Astrocyte of the cerebellum (primary cell): ENCODE measurements at regions of chr2 and their contacts with region 1.

Region 1: DNA sequence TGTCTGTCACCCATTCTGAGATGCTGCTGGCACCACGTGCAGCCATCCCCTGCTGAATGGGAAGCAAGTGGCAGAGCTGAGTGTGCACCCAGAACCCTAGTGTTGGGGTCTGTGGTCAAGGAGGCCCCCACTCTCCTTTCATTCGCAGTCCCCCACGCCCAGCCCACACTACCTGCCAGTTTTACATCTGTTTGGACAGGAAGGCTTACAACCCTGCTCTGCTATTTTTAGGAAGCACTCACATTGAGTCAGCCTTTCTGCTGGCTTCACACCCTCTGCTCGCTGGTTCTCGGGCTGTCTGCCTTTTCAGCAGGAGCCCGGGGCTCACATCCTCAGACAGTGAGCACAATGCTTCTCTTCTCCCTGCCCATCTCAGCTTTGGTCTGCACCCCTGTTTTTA is 10.7 kb upstream of the ADCY3 start:
- DNase-seq: no peak
- H3K4me3 ChIP-seq: no peak overlapping the region
- CTCF ChIP-seq: no peak

Region 2: DNA sequence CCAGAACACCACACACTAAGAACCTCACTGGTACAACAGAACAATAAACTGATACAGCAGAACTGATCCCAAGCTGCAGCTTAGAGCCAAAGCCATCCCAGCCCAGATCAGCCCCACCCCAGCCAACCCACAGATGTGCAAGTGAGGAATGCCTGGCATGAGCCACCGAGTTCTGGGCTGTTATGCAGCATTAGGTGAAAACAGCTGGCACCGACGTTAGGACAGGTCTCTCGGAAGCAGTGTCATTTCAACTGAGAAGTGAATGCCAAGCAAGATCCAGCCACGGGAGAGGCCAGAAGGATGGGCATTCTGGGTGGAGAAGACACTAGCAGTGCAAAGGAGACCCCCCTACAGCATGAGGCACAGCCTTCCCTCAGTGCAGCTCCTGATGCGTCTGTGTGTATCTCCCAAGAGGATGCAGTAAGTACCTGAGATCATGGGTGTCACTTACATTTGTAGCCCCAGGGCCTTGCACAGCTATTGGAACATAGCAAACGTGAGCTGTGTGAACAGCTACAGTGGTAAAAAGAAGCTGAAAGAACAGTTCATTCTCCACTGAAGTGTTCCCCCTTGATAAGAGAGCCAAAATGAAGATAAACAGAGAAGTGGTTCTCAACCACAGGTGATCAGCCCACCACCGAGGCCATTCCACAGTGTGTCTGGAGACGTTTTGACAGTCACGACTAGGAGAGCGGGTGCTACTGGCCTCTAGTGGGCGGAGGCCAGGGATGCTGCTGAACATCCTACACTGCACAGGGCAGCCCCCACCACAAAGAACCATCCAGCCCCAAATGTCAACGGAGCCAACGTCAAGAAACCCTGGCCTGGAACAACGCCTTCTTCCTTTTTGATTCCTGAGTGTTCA is 49.4 kb before region 1 on chr2:
- in situ Hi-C with region 1: loop called (anchors 5 kb)
- DNase-seq: no peak
- H3K4me3 ChIP-seq: no peak overlapping the region
- CTCF ChIP-seq: no peak

Region 3: DNA sequence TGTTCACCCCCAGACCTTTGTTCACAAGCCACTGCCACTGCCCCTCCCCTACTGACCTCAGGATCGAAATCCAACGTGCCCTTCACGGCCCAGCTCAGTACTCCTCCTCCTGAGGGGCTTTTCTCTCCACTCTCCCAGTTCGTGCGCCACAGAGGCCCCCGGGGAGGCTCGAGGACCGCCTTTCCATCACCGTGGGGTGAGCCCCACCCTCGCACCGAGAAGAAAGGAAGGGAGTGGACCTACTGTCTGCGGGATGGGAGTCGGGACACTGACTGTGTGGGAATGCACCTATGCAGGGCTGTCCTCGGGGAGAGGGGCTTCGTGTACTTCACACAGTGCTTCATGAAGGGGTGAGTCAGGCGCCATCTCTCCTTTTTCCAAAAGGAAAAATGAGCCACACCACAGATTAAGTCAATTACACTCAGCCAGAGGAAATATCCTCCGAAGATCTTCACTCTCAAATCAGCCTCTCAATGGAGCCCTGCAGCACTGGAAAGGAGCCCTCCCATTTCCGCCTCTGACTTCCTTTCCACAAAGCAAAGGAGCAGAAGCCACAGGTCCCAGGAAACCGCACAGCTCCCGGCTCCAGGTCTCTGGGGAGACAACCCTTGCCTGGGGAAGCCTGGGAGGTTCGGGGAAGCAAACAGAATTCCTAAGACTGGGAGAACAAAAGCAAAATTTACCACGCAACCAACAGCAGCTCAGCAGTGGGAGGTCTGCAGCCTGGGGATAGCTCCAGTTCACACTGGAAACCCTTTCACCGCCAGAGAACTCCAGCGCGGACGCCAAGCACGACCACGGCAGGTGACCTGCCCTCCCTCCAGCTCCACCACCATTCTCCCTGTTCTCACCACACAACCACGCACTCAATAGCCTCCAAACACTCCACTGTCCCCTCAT is 32.4 kb before region 1 on chr2:
- in situ Hi-C with region 1: no loop called
- DNase-seq: peak; percentile 19
- H3K4me3 ChIP-seq: no peak overlapping the region
- CTCF ChIP-seq: no peak

Region 4: DNA sequence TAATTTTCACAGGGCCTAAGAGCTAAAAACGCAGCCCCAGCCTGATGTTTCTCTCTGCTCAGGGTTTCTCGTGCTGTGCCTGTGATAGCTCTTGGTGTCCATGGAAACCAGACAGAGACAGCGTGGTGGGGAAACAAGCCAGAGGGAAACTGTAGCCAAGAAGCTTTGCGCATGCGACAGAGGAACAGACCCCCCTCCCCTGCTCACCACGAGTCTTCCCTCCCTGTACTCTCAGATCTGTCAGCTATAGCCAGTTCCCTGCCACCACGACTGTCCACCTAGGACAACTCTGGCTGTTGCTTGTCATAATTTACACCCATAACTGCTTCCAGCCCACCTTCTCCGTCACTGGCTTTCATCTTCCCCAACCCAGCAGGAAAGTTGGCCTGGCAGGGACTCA is 54.1 kb after region 1 on chr2:
- in situ Hi-C with region 1: no loop called
- DNase-seq: peak; percentile 31
- H3K4me3 ChIP-seq: no peak overlapping the region
- CTCF ChIP-seq: no peak